ENCODE measurements at regions of chr3 and their contacts with region 1.

Region 1: GRCh38 chr3:113745273-113746068 is 578 bp downstream of the NAA50 start:
- DNase-seq: peak; percentile 34 to 82
- H3K4me3 ChIP-seq: peak overlapping the region; percentile 95 to 100 (median 98)
- H3K27ac ChIP-seq: peak overlapping the region; percentile 99
- H3K4me1 ChIP-seq: peaks cover 0 to 6% (median 2%) of the 10 kb centered on the region in 4 experiments; a peak in 4 of 7 replicates
- H3K27me3 ChIP-seq: no peaks in the 10 kb centered on the region
- CTCF ChIP-seq: peak; percentile 48 to 83 (median 82)
- EP300 ChIP-seq: no peak
- POLR2A ChIP-seq: peak; percentile 33 to 82
- RAD21 ChIP-seq: peak; percentile 71 to 80

Region 2: GRCh38 chr3:113730550-113730949 is 14.9 kb before region 1 on chr3:
- CTCF ChIA-PET with region 1: interaction called, 34 read pairs
- POLR2A ChIA-PET with region 1: interaction called, 14 read pairs
- DNase-seq: no peak
- H3K4me3 ChIP-seq: no peak overlapping the region
- H3K27ac ChIP-seq: no peak overlapping the region
- H3K4me1 ChIP-seq: no peaks in the 10 kb centered on the region; a peak in 1 of 7 replicates
- H3K27me3 ChIP-seq: no peaks in the 10 kb centered on the region
- CTCF ChIP-seq: no peak
- EP300 ChIP-seq: no peak
- POLR2A ChIP-seq: no peak
- RAD21 ChIP-seq: no peak

Region 3: GRCh38 chr3:113968986-113969385 is 223.5 kb after region 1 on chr3:
- CTCF ChIA-PET with region 1: no interaction called
- POLR2A ChIA-PET with region 1: no interaction called
- DNase-seq: no peak
- H3K4me3 ChIP-seq: no peak overlapping the region
- H3K27ac ChIP-seq: no peak overlapping the region
- H3K4me1 ChIP-seq: no peaks in the 10 kb centered on the region
- H3K27me3 ChIP-seq: no peaks in the 10 kb centered on the region
- CTCF ChIP-seq: no peak
- EP300 ChIP-seq: no peak
- POLR2A ChIP-seq: no peak
- RAD21 ChIP-seq: no peak

Measured in H1 (cell line).